ENCODE measurements at regions of chr11 and their contacts with region 1.

Region 1: DNA sequence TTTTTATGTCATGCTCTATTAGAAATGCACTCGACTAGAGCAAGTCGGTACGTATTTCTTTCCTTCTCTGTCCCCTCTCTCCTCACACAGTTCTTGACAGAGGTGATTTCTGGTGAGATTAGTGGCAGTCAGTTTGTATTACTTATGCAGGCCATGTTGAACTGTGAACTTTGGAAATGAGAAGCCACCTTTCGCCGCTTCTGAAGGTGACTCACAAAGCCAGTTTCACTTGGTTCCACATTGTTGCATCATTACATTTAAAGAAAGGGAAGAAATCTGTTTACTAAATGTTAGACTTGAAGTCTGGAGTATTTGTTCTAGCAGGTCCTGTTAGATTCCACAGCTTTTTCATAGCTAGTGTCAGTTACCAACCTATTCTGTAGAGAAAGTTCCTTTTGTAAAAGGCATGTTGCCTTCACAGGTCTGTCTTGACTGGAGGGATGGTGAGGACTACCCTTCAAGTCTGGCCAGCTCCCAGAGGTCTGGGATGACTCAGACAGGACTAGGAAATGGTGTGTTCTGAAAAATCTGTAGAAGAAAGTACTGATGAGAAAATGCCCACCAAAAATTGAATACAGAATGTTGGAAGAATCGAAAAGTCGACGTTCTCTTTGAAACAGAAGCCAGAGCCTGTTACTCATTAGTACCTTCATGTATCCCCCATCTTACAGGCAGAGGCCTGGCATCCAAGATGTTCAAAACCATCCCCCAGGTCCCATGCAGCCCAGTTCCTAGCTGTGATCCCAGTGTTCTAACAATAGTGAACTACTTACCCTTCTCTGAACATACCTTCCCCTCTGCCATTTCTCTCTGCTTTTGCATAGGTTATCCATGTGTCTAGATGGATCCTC is 181.4 kb downstream of the DBX1 start:
- DNase-seq: peak; percentile 88
- ATAC-seq: peak; percentile 51
- H3K4me3 ChIP-seq: peak overlapping the region; percentile 53 to 58 (median 56)
- H3K27ac ChIP-seq: peak overlapping the region; percentile 72
- H3K4me1 ChIP-seq: peaks cover 83% of the 10 kb centered on the region
- H3K27me3 ChIP-seq: no peaks in the 10 kb centered on the region
- CTCF ChIP-seq: no peak
- EP300 ChIP-seq: peak in 1 of 2 experiments; percentile 94; a peak in 3 of 4 replicates
- POLR2A ChIP-seq: peak; percentile 29 to 44; a peak in 1 of 4 replicates
- RAD21 ChIP-seq: no peak

Region 2: DNA sequence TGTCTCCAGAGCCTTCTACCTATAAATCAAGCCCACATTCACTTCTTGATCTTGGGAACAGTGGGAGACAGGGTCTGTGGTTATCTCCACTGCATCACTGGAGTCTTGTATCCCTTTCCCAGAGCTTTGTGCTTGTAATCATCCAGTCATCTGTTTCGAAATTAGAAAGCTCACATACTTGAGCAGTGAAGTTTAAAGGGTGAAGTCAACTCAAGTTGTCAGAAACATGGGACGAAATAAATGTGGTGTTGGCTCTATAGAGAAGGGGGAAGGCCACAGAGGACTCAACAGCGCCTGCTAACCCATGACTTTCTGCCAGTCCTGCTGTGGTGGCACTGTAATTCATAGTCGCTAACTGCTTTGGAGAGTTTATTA is 16.1 kb before region 1 on chr11:
- CTCF ChIA-PET with region 1: no interaction called
- POLR2A ChIA-PET with region 1: interaction called, 14 read pairs
- in situ Hi-C with region 1: no loop called
- intact Hi-C with region 1: no loop called
- DNase-seq: no peak
- ATAC-seq: no peak
- H3K4me3 ChIP-seq: no peak overlapping the region
- H3K27ac ChIP-seq: no peak overlapping the region
- H3K4me1 ChIP-seq: peaks cover 18% of the 10 kb centered on the region
- H3K27me3 ChIP-seq: no peaks in the 10 kb centered on the region
- CTCF ChIP-seq: no peak
- EP300 ChIP-seq: no peak
- POLR2A ChIP-seq: no peak
- RAD21 ChIP-seq: no peak

Region 3: GRCh38 chr11:19989191-19989590 is 10.3 kb after region 1 on chr11:
- CTCF ChIA-PET with region 1: no interaction called
- POLR2A ChIA-PET with region 1: interaction called, 67 read pairs
- in situ Hi-C with region 1: no loop called
- intact Hi-C with region 1: no loop called
- DNase-seq: no peak
- ATAC-seq: no peak
- H3K4me3 ChIP-seq: no peak overlapping the region
- H3K27ac ChIP-seq: no peak overlapping the region
- H3K4me1 ChIP-seq: peaks cover 43% of the 10 kb centered on the region
- H3K27me3 ChIP-seq: no peaks in the 10 kb centered on the region
- CTCF ChIP-seq: no peak
- EP300 ChIP-seq: no peak
- POLR2A ChIP-seq: no peak
- RAD21 ChIP-seq: no peak

Region 4: DNA sequence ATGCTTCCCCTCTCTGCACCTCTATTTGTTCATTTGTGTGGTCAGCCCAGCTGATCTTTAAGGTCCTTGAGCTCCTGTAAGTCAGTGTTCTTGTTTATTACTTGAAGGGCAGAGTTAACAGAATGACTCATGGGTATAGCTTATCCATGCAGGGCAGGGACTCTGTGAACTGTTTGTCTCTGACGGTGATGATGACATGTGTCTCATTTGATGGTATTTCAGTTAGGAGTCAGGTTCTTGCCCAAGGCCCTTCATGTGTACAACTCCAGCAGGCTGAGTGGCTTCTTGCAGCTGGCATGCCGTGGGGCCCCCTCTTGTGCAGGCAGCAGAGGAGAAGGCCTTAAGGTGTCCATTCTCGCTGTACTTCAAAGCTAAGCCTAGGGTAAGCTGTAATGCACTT is 16.2 kb after region 1 on chr11:
- CTCF ChIA-PET with region 1: no interaction called
- POLR2A ChIA-PET with region 1: interaction called, 107 read pairs
- in situ Hi-C with region 1: no loop called
- intact Hi-C with region 1: loop called (anchors 2 kb)
- DNase-seq: peak; percentile 88
- ATAC-seq: peak; percentile 86
- H3K4me3 ChIP-seq: no peak overlapping the region
- H3K27ac ChIP-seq: peak overlapping the region; percentile 13
- H3K4me1 ChIP-seq: peaks cover 48% of the 10 kb centered on the region
- H3K27me3 ChIP-seq: no peaks in the 10 kb centered on the region
- CTCF ChIP-seq: no peak
- EP300 ChIP-seq: peak; percentile 34 to 39; a peak in 2 of 4 replicates
- POLR2A ChIP-seq: no peak
- RAD21 ChIP-seq: no peak

Region 5: GRCh38 chr11:20000351-20001134 is 21.6 kb after region 1 on chr11:
- CTCF ChIA-PET with region 1: no interaction called
- POLR2A ChIA-PET with region 1: interaction called, 107 read pairs
- in situ Hi-C with region 1: no loop called
- intact Hi-C with region 1: loop called (anchors 2 kb)
- DNase-seq: peak; percentile 88
- ATAC-seq: peak; percentile 74
- H3K4me3 ChIP-seq: peak overlapping the region; percentile 18 to 65 (median 28); a peak in 5 of 6 replicates
- H3K27ac ChIP-seq: peak overlapping the region; percentile 86
- H3K4me1 ChIP-seq: peaks cover 75% of the 10 kb centered on the region
- H3K27me3 ChIP-seq: no peaks in the 10 kb centered on the region
- CTCF ChIP-seq: peak; percentile 28; the same call in 1 of the 2 replicates
- EP300 ChIP-seq: peak in 1 of 2 experiments; percentile 68; a peak in 2 of 4 replicates
- POLR2A ChIP-seq: peak; percentile 38 to 55; a peak in 2 of 4 replicates
- RAD21 ChIP-seq: peak; percentile 22; the same call in 1 of the 2 replicates

Region 6: GRCh38 chr11:20013346-20014066 is 34.6 kb after region 1 on chr11:
- CTCF ChIA-PET with region 1: no interaction called
- POLR2A ChIA-PET with region 1: interaction called, 10 read pairs
- in situ Hi-C with region 1: no loop called
- intact Hi-C with region 1: no loop called
- DNase-seq: peak; percentile 73
- ATAC-seq: peak; percentile 80
- H3K4me3 ChIP-seq: peak overlapping the region in 1 of 3 experiments; percentile 27; a peak in 3 of 6 replicates
- H3K27ac ChIP-seq: peak overlapping the region; percentile 68
- H3K4me1 ChIP-seq: peaks cover 93% of the 10 kb centered on the region
- H3K27me3 ChIP-seq: no peaks in the 10 kb centered on the region
- CTCF ChIP-seq: no peak
- EP300 ChIP-seq: peak in 1 of 2 experiments; percentile 49; a peak in 1 of 4 replicates
- POLR2A ChIP-seq: no peak
- RAD21 ChIP-seq: no peak

Region 7: DNA sequence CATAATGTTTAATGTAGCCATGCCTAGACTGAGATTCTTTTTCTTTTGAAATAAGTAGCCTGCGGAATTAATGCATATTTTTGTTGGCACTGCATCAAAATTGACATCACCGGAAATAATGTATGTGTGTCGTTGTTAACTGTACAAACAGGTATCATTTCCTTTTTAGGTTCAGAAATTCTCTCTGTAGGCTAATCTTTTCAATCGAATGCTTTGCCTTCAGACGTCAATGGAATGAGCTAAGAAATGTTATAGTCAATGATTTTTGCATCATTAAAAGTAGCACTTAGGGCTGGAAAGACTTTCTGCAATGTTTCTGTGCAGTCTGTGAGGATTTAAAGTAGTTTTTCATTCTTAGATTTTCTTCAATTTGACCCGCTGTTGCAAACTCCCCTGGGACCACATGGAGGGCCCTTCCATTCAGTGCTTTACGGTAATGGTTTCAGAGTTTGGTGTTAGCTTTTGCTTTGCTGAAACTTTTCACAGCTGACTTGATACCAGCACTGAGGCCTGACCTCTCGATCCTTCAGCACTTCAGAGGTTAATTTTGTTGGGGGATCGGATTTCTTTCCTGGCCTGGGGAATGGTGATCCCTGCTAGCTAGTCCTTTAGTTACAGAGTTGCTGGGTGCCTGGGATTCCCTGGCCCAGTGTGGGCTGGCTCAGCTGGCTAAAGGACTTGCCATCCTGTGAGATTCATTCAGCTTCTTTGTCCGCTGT is 43.6 kb after region 1 on chr11:
- CTCF ChIA-PET with region 1: no interaction called
- POLR2A ChIA-PET with region 1: interaction called, 60 read pairs
- in situ Hi-C with region 1: no loop called
- intact Hi-C with region 1: no loop called
- DNase-seq: peak; percentile 79
- ATAC-seq: peak; percentile 75
- H3K4me3 ChIP-seq: peak overlapping the region; percentile 58 to 86 (median 80)
- H3K27ac ChIP-seq: peak overlapping the region; percentile 76
- H3K4me1 ChIP-seq: peaks cover 91% of the 10 kb centered on the region
- H3K27me3 ChIP-seq: no peaks in the 10 kb centered on the region; a peak in 1 of 5 replicates
- CTCF ChIP-seq: no peak
- EP300 ChIP-seq: no peak
- POLR2A ChIP-seq: 0 out of 4 replicates have a peak, but pooled peaks of 1 of the 2 experiments have one; percentile 29
- RAD21 ChIP-seq: no peak